IMR-90 (cell line): ENCODE measurements at regions of chr11 and their contacts with region 1.

Region 1: GRCh38 chr11:11028017-11028692 is 170.3 kb upstream of the ZBED5 start:
- DNase-seq: peak; percentile 44
- ATAC-seq: peak; percentile 85
- H3K4me3 ChIP-seq: no peak overlapping the region
- H3K27ac ChIP-seq: no peak overlapping the region
- H3K4me1 ChIP-seq: peaks cover 3% of the 10 kb centered on the region; the same call in 1 of the 2 replicates
- H3K27me3 ChIP-seq: peaks cover 10% of the 10 kb centered on the region
- CTCF ChIP-seq: peak; percentile 72
- POLR2A ChIP-seq: no peak
- RAD21 ChIP-seq: peak; percentile 74

Region 2: DNA sequence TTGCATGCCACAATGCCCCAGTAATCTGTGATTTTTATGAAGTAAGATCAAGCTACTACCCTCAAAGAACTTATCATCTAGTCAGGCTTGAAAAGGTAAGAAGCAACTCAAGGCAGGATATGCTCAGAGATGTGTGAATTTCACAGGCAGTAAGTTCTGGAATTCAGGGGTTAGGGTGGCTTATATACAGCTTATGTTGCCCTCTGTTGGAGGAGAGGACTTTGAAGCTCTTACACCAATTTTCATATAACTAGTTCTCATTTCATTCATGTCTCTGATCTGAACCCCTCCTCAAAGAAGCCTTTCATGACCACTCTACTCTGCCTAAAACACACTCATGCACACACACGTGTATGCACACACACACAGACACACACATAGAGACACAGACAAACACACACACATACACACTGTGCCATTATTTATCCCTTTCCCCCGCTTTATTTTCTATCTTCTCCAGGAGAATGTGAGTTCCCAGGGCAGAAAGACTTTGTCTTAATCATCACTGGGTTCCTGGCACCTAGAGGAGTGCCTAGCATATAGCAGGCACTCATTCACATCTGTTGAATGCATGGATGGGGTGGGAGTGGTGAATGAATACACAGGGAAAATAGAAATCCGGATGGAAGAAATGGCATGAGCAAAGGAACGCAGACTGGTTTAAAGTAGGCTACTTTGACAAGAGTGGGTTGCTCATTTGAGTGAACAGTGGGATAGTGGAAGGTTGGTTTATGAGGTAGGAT is 50.4 kb after region 1 on chr11:
- CTCF ChIA-PET with region 1: interaction called, 5 read pairs
- POLR2A ChIA-PET with region 1: no interaction called
- dilution Hi-C with region 1: no loop called
- in situ Hi-C with region 1: no loop called
- intact Hi-C with region 1: loop called (anchors 1 kb)
- DNase-seq: peak; percentile 28
- ATAC-seq: peak; percentile 86
- H3K4me3 ChIP-seq: no peak overlapping the region
- H3K27ac ChIP-seq: no peak overlapping the region
- H3K4me1 ChIP-seq: no peaks in the 10 kb centered on the region
- H3K27me3 ChIP-seq: peaks cover 63% of the 10 kb centered on the region
- CTCF ChIP-seq: peak; percentile 37
- POLR2A ChIP-seq: no peak
- RAD21 ChIP-seq: no peak; the same call in 1 of the 2 replicates

Region 3: GRCh38 chr11:11157185-11157584 is 129.0 kb after region 1 on chr11:
- CTCF ChIA-PET with region 1: no interaction called
- POLR2A ChIA-PET with region 1: no interaction called
- dilution Hi-C with region 1: no loop called
- in situ Hi-C with region 1: no loop called
- intact Hi-C with region 1: loop called (anchors 1 kb)
- DNase-seq: peak; percentile 8
- ATAC-seq: peak; percentile 42; the same call in 1 of the 2 replicates
- H3K4me3 ChIP-seq: no peak overlapping the region
- H3K27ac ChIP-seq: no peak overlapping the region
- H3K4me1 ChIP-seq: no peaks in the 10 kb centered on the region
- H3K27me3 ChIP-seq: peaks cover 49% of the 10 kb centered on the region
- CTCF ChIP-seq: peak; percentile 38
- POLR2A ChIP-seq: no peak
- RAD21 ChIP-seq: peak; percentile 44

Region 4: DNA sequence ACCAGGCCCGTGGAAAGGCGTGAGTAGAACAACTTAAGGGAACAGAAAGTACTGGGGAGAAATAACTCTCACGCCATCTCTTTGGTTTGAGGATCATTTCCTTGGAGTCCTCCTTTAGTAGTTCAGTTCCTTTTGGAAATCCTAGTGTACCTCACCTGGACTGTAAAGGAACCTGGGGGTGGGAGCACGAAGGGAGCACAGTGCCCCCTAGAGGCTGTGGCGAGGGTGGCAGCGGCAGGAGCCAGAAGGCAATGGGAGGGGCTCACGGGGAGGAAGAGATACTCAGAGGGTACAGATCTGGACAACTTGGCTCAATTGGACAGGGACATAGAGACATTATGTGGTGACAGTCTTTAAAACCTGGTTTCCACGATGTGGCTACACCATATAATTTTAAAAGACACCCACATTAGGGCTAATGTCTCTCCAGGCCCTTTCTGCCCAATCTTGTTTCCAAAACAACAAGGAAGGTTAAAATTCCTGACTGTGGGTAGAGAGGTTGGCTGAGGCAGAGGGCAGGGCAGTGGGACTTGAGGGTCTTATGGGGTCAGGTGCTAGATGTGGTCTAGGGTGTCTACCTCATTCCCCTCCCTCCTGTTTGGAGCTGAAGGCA is 237.9 kb after region 1 on chr11:
- CTCF ChIA-PET with region 1: no interaction called
- POLR2A ChIA-PET with region 1: no interaction called
- dilution Hi-C with region 1: no loop called
- in situ Hi-C with region 1: no loop called
- intact Hi-C with region 1: loop called (anchors 1 kb)
- DNase-seq: peak; percentile 3
- ATAC-seq: peak; percentile 60
- H3K4me3 ChIP-seq: no peak overlapping the region
- H3K27ac ChIP-seq: no peak overlapping the region
- H3K4me1 ChIP-seq: 0 out of 2 replicates have a peak, but pooled peaks cover 1% of the 10 kb centered on the region
- H3K27me3 ChIP-seq: peaks cover 16% of the 10 kb centered on the region
- CTCF ChIP-seq: peak; percentile 59
- POLR2A ChIP-seq: no peak
- RAD21 ChIP-seq: peak; percentile 47